Astrocyte of the cerebellum (primary cell): ENCODE measurements at regions of chr2 and their contacts with region 1.

Region 1: DNA sequence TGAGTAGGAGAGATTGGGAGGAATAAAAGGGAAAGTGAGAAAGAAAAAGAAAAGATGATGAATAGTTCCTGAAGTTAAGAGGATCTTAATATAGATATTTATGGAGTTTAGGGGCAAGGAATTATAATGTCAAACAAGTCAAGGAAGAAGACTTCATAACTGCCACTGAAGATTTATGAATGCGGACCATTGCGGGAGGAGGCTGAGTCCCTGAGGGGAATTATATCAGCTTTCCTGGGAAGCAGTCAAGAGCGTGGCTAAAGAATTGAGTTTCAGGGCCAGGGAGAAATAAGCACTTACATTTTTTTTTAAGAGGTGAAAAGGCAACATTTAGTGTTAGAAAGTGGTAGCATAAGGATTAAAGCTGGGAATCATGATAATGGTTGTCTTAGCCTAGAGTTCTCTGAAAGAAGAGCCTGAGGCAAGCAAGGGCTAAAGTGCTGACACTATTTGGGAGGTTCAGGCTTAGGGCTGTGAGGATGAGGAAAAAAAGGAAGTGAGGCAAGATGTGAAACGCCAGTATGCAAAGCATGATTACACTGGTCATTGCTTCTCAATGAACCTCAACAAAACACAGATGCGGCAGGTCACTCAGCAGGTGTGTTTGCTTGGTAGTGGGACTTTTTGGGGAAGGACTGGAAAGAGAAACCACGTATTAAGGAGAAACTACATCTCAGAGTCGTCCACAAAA is 217.1 kb downstream of the SLC4A3 start:
- DNase-seq: no peak
- H3K4me3 ChIP-seq: no peak overlapping the region
- CTCF ChIP-seq: no peak

Region 2: DNA sequence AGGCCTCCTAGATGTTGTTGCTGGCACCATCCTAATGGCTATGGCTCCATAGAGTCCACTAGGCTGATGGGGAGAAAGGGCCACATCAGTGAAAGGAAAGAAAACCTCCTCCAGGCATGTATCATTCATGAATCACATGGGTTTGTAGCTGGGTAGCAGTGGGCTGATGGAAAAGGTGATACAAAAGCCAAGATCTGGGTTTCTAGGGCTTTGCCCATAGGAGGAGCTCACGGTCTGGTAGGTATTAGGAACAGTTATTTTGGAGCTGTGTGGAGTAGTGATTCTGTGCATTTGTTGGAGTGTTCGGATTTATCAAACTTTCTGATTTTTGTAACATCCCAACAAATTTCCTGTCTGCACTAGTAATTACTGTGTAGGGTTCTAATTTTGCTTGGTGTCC is 42.1 kb after region 1 on chr2:
- in situ Hi-C with region 1: no loop called
- DNase-seq: no peak
- H3K4me3 ChIP-seq: no peak overlapping the region
- CTCF ChIP-seq: peak; percentile 16

Region 3: DNA sequence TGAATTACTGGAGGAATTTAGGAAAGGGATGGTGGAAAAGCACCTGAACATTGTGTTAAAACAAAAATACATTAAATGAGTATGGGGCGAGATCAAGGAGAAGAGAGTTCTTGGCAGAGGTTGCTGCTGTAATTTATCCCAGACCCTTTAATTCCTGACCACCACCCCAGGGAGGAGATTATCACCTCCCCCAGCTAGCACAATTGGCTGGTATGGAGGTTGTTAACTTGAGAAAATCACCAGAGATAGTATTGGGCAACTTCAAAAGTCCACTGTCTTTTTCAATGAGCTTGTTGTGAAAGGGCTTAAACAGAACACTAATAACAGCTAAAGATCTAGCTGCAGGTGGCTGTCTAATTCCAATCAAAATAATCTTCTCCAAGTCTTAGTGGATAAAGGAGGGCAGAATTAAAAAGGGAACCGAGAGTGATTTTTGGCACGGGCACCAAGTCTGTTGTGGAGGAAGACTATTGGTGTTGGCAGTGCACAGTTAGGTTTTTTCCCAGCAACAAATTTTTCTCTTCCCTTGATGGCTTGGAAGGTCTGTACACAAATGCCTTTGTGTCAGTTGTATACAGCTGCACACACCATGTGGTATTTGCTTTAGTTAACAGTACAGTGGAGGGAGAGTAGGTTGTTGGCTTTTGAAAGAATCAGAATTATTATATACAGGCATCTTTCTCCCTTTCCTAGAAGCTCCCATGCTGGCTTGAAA is 72.3 kb after region 1 on chr2:
- in situ Hi-C with region 1: no loop called
- DNase-seq: no peak
- H3K4me3 ChIP-seq: no peak overlapping the region
- CTCF ChIP-seq: no peak

Region 4: DNA sequence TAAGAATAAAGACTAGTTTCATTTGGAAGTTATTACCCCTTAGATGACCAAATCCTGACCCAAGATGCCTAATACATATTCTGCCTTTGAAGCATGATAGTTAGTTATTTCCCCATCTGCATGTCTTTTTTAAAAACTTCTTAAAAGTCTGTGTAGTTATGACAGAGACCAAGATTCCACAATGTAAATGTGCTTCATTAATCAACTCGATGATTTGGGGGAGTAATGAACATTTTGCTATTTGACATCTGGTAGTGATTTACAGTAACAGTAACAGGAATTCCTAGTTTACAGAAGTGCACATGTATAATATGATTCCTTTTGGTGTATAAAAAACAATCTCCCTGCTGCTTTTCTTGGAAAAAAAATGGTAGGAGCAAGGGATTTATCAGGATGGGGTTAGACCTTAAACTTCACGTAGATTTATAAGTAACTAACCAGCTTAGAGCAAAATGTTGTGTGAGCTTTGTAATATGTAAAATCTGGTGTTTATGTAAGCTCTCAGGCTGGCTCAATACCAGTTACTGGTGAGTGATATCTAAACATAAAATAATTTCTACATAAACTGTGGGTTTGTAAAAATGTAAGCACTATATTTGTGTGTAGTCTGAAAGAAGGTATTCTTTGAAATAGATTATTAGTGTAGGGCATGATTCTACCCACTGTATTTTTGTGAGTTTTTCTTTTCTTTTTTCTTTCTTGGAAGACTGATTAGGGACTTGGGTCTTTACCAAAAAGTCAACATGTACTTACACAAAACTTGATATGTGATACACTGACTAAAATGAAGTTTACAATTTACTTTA is 1085.9 kb after region 1 on chr2:
- in situ Hi-C with region 1: loop called (anchors 10 kb)
- DNase-seq: peak; percentile 6
- H3K4me3 ChIP-seq: no peak overlapping the region
- CTCF ChIP-seq: no peak